Activated T-helper 1 cell treated with anti-CD3 and anti-CD28 coated beads, Interleukin-12 subunit alpha, Interleukin-12 subunit beta, Interleukin-2, Interleukin-4 antibody, amounts not matched to agents 30 ng/mL and 10 ng/mL and 1 ng/mL, durations not matched to agents 14 hours and 24 hours and 36 hours (primary cell): ENCODE measurements at regions of chr1 and their contacts with region 1.

Region 1: GRCh38 chr1:147172168-147172992 is at the start of gene PRKAB2:
- DNase-seq: peak; percentile 86
- H3K4me3 Mint-ChIP-seq: peak within 1 kb of the TSS; percentile 96
- H3K27ac Mint-ChIP-seq: peak within 1 kb of the TSS; percentile 94
- H3K4me1 Mint-ChIP-seq: peaks cover 31% of the 10 kb centered on the region
- H3K27me3 Mint-ChIP-seq: peaks cover 2% of the 10 kb centered on the region
- total RNA-seq, gene PRKAB2: 8.0 and 9.3 TPM in 2 replicates

Region 2: GRCh38 chr1:145879775-145880174 is 1292.6 kb before region 1 on chr1:
- intact Hi-C with region 1: no loop called
- DNase-seq: no peak
- H3K4me3 Mint-ChIP-seq: no peak overlapping the region
- H3K27ac Mint-ChIP-seq: no peak overlapping the region
- H3K4me1 Mint-ChIP-seq: peaks cover 3% of the 10 kb centered on the region
- H3K27me3 Mint-ChIP-seq: peaks cover 42% of the 10 kb centered on the region

Region 3: GRCh38 chr1:147242439-147243227 is 70.3 kb after region 1 on chr1 and contains the start of gene CHD1L:
- intact Hi-C with region 1: loop called (anchors 1 kb)
- DNase-seq: peak; percentile 92
- H3K4me3 Mint-ChIP-seq: peak within 1 kb of the TSS; percentile 95
- H3K27ac Mint-ChIP-seq: peak within 1 kb of the TSS; percentile 94
- H3K4me1 Mint-ChIP-seq: peaks cover 43% of the 10 kb centered on the region
- H3K27me3 Mint-ChIP-seq: no peaks in the 10 kb centered on the region
- total RNA-seq, gene CHD1L: 67.6 and 75.1 TPM in 2 replicates

Region 4: DNA sequence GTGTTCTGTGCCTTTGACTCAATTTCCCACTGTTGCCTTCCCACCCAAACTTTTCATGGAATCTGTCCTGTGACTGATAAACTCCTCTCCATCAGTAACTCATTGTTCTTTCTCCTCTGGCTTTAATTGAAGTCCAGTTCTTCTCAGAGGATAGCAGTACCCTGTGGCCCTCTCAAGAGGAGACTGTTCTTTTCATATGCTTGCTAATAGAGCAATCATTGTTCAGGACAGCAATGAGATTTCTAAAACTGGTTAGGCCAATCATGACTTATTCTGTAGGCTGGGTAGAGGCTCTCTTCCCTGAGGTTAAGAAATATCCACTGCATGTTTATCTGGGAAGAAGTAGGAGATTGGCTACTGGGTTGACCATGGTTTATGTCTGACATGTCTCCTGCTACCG is 168.9 kb after region 1 on chr1:
- intact Hi-C with region 1: no loop called
- DNase-seq: no peak
- H3K4me3 Mint-ChIP-seq: no peak overlapping the region
- H3K27ac Mint-ChIP-seq: no peak overlapping the region
- H3K4me1 Mint-ChIP-seq: no peaks in the 10 kb centered on the region
- H3K27me3 Mint-ChIP-seq: peaks cover 11% of the 10 kb centered on the region